ENCODE measurements at regions of chr5 and their contacts with region 1.

Region 1: DNA sequence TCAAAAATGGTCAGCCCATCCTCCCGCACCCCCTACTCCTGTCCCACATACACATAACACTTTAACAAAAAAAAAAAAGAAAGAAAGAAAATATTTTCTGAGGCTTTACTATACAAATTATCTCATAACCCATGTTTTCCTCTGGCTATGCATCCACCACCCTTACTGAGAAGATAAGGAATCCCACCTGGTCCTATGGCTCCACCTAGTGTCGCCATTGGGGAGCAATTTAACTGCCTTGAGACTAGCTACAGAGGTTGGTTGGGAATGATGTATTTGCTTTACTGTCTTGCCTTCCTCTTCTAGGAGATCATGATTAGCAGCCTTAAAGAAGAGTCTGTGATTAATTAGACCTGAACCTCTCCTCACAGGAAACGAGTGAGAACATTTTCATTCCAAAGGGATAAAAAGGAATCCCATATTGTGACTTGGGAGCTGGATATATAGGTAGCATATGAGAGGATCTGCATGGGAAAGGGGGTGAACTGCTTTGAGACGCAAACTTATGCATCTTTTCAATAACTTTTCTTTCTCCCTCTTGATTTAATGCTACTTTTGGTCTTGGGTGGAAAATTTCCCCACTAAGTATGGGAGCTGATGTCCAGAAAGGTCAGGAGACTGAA is 77.7 kb upstream of the SELENOP start:
- DNase-seq: peak; percentile 68 to 84
- H3K4me3 ChIP-seq: no peak overlapping the region
- H3K27ac ChIP-seq: no peak overlapping the region
- H3K4me1 ChIP-seq: peaks cover 8% of the 10 kb centered on the region
- H3K27me3 ChIP-seq: peaks cover 10% of the 10 kb centered on the region; the same call in 1 of the 2 replicates
- CTCF ChIP-seq: peak; percentile 99

Region 2: GRCh38 chr5:41893074-41893851 is 996.2 kb before region 1 on chr5:
- CTCF ChIA-PET with region 1: interaction called, 16 read pairs
- POLR2A ChIA-PET with region 1: no interaction called
- intact Hi-C with region 1: no loop called
- DNase-seq: no peak
- H3K4me3 ChIP-seq: no peak overlapping the region
- H3K27ac ChIP-seq: no peak overlapping the region
- H3K4me1 ChIP-seq: peaks cover 5% of the 10 kb centered on the region; the same call in 1 of the 2 replicates
- H3K27me3 ChIP-seq: peaks cover 9% of the 10 kb centered on the region; the same call in 1 of the 2 replicates
- CTCF ChIP-seq: no peak

Region 3: DNA sequence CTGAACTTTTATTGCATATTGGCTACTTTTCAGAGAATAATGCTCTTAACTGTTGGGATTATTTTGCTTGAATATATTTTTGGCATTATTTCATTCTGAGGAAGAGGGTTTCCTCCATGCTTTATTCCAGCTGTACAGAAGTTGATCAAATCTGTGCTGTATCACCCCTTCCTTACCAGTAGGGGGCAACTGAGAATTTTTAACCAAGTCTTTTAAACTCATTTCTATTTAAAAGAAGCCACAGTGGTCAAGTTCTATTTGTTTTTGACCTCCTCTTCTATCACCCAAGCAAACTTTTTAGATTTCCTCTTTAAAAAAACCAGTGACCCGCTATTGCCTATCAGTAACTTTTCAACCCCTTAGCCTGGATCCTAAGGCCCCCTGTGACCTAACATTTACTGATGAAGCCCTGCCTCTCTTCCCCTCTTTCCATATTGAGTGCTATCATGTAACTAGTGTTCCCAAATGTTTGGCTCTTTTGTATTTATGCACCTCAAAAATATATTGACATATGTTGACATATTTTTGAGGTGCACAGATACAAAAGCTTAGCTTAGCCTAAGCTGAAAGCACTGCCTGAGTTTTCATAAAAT is 883.8 kb before region 1 on chr5:
- CTCF ChIA-PET with region 1: no interaction called
- POLR2A ChIA-PET with region 1: no interaction called
- intact Hi-C with region 1: loop called (anchors 5 kb)
- DNase-seq: peak in 1 of 2 experiments; percentile 47
- H3K4me3 ChIP-seq: no peak overlapping the region
- H3K27ac ChIP-seq: no peak overlapping the region
- H3K4me1 ChIP-seq: no peaks in the 10 kb centered on the region
- H3K27me3 ChIP-seq: no peaks in the 10 kb centered on the region
- CTCF ChIP-seq: peak; percentile 96

Region 4: DNA sequence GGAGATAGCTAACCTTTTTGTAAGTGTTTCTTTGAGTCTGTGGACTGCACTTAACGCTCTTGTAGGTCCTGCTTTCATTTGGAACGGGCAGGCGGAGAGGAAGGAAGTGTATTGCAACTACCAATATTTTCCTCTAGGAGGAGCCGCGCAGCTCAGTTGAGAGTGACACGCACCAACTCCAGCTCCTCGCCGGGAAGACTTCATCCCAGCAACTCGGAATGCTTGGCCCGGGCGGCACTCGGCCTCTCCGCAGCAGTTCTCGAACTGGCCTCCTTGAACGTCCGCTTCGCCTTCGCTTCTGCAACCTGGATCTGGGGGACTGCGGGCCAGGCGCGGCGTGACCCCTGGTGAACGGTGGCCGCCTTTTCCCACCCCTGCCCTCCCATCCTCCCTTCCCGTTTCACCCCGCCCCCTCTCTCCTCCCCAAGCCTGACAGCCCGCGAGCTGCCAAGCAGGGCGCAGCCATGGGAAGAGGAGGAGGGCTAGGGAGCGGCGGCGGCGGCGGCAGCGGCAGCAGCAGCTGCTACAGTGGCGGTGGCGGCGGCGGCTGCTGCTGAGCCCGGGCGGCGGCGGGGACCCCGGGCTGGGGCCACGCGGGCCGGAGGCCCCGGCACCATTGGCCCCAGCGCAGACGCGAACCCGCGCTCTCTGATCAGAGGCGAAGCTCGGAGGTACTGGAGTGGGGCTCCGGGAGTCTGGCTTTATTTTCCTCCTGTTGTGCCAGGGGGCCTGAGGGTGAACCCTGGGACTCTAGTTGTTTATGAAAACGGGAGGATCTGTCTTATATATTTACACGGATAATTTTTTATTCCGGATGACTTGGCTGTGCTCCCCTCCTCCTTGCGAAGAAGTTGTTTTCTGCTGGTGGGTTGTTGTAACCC is 465.9 kb before region 1 on chr5 and contains the start of gene GHR:
- CTCF ChIA-PET with region 1: interaction called, 3 read pairs
- POLR2A ChIA-PET with region 1: no interaction called
- intact Hi-C with region 1: loop called (anchors 1 kb)
- DNase-seq: peak in 1 of 2 experiments; percentile 67
- H3K4me3 ChIP-seq: no peak within 1 kb of the TSS
- H3K27ac ChIP-seq: no peak within 1 kb of the TSS
- H3K4me1 ChIP-seq: no peaks in the 10 kb centered on the region
- H3K27me3 ChIP-seq: no peaks in the 10 kb centered on the region
- CTCF ChIP-seq: peak; percentile 30; the same call in 1 of the 2 replicates
- total RNA-seq, gene GHR: not detected in 2 replicates

Region 5: DNA sequence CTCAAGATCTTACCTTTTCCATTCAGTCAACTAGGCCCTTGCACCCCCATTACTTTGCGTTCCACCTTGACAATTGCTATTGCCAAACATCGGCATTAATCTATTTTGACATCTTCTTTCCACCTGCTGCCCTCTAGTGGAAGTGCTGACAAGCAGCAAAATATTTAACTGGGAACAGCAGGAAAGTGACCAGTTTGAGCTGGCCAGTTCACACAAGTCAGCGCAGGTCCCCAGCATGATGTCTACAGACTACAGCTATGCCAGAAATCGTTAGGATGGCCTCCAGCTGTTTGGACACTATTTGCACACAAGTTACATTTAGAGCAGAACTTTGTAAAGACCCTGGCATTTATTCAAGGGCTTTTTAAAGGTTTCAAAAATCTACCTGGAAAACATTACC is 306.1 kb before region 1 on chr5:
- CTCF ChIA-PET with region 1: interaction called, 3 read pairs
- POLR2A ChIA-PET with region 1: no interaction called
- intact Hi-C with region 1: loop called (anchors 2 kb)
- DNase-seq: peak in 1 of 2 experiments; percentile 47
- H3K4me3 ChIP-seq: no peak overlapping the region
- H3K27ac ChIP-seq: no peak overlapping the region
- H3K4me1 ChIP-seq: no peaks in the 10 kb centered on the region
- H3K27me3 ChIP-seq: peaks cover 27% of the 10 kb centered on the region; the same call in 1 of the 2 replicates
- CTCF ChIP-seq: peak; percentile 95

Region 6: GRCh38 chr5:42858031-42858643 is 31.3 kb before region 1 on chr5:
- CTCF ChIA-PET with region 1: interaction called, 7 read pairs
- POLR2A ChIA-PET with region 1: interaction called, 11 read pairs
- intact Hi-C with region 1: no loop called
- DNase-seq: no peak
- H3K4me3 ChIP-seq: no peak overlapping the region
- H3K27ac ChIP-seq: no peak overlapping the region
- H3K4me1 ChIP-seq: no peaks in the 10 kb centered on the region; the same call in 1 of the 2 replicates
- H3K27me3 ChIP-seq: peaks cover 26% of the 10 kb centered on the region; the same call in 1 of the 2 replicates
- CTCF ChIP-seq: no peak